ENCODE measurements at regions of chr2 and their contacts with region 1.

Region 1: DNA sequence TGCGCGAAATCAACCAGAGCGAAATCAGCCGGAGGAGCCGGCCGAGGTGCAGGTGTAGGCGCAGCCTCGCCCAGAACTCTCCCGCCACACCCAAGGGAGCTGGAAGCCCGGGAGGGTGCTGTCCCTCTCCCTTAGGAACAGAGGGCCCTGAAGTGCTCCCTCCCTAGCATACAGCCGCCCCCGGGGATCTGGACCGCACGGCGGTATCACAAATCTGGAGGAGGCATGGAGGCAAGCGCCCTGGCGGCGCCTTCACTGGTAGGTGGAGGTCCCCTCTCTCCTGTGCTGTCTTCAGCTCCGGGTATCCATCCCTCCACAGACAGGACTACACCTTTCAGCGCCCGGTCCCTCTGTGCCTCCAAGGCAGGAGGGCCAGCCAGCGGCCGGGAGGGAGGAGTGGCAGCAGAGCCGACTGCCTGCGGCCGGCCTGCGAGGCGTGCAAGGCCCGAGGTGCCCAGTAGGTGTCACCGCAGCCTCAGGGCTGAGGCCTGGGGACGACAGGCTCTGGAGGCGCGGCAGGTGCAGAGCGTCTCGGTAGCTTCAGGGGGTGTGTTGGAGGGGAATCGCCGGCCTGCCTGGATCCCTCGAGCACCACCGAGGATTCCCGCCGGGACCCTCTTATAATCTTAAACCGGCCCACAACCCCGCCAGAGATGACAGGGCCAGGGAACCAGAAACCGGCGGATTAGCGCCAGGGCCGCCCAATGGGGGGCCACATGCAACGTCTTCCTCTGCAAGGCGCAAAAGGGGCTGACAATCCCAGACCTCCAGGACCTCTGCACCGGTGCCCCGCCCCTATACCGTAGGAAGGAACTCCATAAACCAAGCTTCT is 2.8 kb downstream of the IHH start:
- DNase-seq: peak; percentile 66 to 81 (median 68)
- H3K4me3 ChIP-seq: no peak overlapping the region
- H3K4me3 Mint-ChIP-seq: peak overlapping the region; percentile 11 to 84 (median 65)
- H3K27ac ChIP-seq: no peak overlapping the region
- H3K27ac Mint-ChIP-seq: peak overlapping the region in 3 of 8 donors; percentile 47 to 70 (median 55)
- H3K4me1 ChIP-seq: peaks cover 21% of the 10 kb centered on the region
- H3K4me1 Mint-ChIP-seq: peaks cover 12 to 30% (median 23%) of the 10 kb centered on the region in 3 donors
- H3K27me3 ChIP-seq: peaks cover 40% of the 10 kb centered on the region
- H3K27me3 Mint-ChIP-seq: peaks cover 56 to 67% of the 10 kb centered on the region in 2 donors

Region 2: GRCh38 chr2:219029829-219030165 is 28.1 kb before region 1 on chr2:
- CTCF ChIA-PET with region 1: interaction called, 13 read pairs
- POLR2A ChIA-PET with region 1: no interaction called
- DNase-seq: peak; percentile 62 to 84 (median 68)
- H3K4me3 ChIP-seq: no peak overlapping the region
- H3K4me3 Mint-ChIP-seq: no peak overlapping the region
- H3K27ac ChIP-seq: no peak overlapping the region
- H3K27ac Mint-ChIP-seq: peak overlapping the region in 1 of 8 donors; percentile 88
- H3K4me1 ChIP-seq: no peaks in the 10 kb centered on the region
- H3K4me1 Mint-ChIP-seq: no peaks in the 10 kb centered on the region
- H3K27me3 ChIP-seq: peaks cover 4% of the 10 kb centered on the region
- H3K27me3 Mint-ChIP-seq: peaks cover 14 to 44% of the 10 kb centered on the region in 2 donors

Region 3: GRCh38 chr2:219041252-219041651 is 16.7 kb before region 1 on chr2 and contains the start of gene CFAP65:
- CTCF ChIA-PET with region 1: interaction called, 27 read pairs
- POLR2A ChIA-PET with region 1: interaction called, 3 read pairs
- DNase-seq: peak in 1 of 5 donors; percentile 25
- H3K4me3 ChIP-seq: no peak within 1 kb of the TSS
- H3K4me3 Mint-ChIP-seq: peak within 1 kb of the TSS in 6 of 7 donors; percentile 51 to 72 (median 60)
- H3K27ac ChIP-seq: no peak within 1 kb of the TSS
- H3K27ac Mint-ChIP-seq: peak within 1 kb of the TSS in 1 of 8 donors; percentile 77
- H3K4me1 ChIP-seq: no peaks in the 10 kb centered on the region
- H3K4me1 Mint-ChIP-seq: peaks cover 8 to 11% (median 10%) of the 10 kb centered on the region in 3 donors
- H3K27me3 ChIP-seq: peaks cover 10% of the 10 kb centered on the region
- H3K27me3 Mint-ChIP-seq: peaks cover 35 to 80% of the 10 kb centered on the region in 2 donors
- total RNA-seq, gene CFAP65: not detected

Region 4: DNA sequence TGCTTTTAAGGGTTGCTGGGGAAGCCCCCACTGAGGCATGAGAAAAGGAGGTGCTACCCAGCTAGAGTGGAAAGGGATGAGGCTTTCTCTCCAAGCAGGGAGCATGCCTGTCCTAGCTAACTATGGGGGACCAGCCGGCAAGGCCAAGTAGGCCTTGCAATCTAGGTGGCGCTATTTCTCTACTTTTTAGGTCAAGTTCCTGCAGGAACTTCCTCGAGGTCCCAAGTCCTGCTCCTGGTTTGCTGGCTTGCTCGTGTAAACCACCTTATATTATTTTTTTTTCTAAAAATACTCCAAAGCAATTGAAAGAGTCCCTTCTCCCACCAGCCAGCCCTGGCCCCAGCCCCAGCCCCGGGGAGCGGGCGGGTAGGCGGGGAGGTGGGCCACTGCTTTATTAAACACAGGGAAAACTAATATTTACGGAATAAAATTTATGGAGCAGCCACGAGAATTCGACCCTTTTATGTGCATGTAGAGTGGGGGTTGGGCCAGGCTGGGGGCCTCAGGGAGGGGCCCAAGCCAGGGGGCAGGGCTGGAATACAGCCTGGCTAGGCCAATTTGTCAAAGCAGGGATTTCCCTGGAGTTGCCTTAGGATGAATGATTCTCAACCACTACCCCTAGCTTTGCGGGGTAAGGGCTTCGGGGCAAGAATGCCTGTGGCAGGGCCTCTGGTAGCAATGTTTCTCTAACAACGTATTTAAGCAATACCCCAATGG is 15.6 kb after region 1 on chr2:
- CTCF ChIA-PET with region 1: interaction called, 59 read pairs
- POLR2A ChIA-PET with region 1: interaction called, 3 read pairs
- DNase-seq: no peak
- H3K4me3 ChIP-seq: no peak overlapping the region
- H3K4me3 Mint-ChIP-seq: no peak overlapping the region
- H3K27ac ChIP-seq: no peak overlapping the region
- H3K27ac Mint-ChIP-seq: no peak overlapping the region
- H3K4me1 ChIP-seq: no peaks in the 10 kb centered on the region
- H3K4me1 Mint-ChIP-seq: no peaks in the 10 kb centered on the region
- H3K27me3 ChIP-seq: no peaks in the 10 kb centered on the region
- H3K27me3 Mint-ChIP-seq: no peaks in the 10 kb centered on the region

Region 5: DNA sequence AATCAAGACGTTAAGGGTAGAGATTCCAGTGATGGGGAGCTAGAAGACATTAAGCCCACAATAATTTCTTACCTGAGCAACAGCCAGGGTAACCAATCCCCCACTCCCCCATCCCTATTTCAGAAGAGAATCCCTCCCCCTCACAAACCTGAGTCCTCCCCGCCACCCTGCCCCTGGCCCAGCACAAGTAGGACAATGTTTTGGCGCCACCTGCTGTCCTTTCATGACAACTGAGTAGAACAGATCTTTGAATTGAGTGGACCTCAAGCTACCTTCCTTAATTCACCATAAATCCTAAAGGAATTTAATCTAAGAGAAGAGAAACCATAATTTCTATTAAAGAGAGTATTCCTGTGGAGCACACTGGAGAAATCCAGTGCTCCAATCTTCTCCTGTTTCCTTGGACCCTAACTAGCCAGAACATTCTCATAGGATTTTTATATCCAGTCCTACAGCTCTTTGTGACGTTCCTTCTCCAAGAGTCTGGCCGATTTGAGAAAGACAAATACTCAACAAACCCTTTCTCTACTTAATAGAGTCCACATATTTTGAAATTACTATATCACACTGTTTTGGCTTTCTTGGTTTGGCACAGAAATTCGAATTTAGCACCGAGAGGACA is 61.6 kb after region 1 on chr2:
- CTCF ChIA-PET with region 1: interaction called, 38 read pairs
- POLR2A ChIA-PET with region 1: no interaction called
- DNase-seq: peak; percentile 21 to 66 (median 38)
- H3K4me3 ChIP-seq: no peak overlapping the region
- H3K4me3 Mint-ChIP-seq: no peak overlapping the region
- H3K27ac ChIP-seq: no peak overlapping the region
- H3K27ac Mint-ChIP-seq: no peak overlapping the region
- H3K4me1 ChIP-seq: peaks cover 5% of the 10 kb centered on the region
- H3K4me1 Mint-ChIP-seq: peaks cover 15 to 16% (median 16%) of the 10 kb centered on the region in 3 donors
- H3K27me3 ChIP-seq: no peaks in the 10 kb centered on the region
- H3K27me3 Mint-ChIP-seq: no peaks in the 10 kb centered on the region

Region 6: DNA sequence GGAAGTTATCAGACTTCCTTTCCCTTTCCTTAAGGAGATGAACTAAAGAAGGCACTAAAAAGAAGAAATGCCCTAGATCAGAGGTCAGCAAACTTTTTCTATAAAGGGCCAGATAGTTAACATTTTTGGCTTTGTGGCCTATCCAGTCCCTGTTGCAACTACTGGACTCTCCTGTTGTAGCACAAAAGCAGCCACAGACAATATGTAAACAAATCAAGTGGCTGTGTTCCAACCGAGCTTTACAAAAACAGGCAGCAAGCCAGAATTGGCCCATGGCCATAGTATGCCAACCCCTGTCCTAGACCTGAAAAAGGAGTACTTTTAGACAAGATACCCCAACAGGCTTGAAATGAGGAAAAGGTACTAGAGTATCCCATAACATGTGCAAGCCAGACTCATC is 91.7 kb after region 1 on chr2:
- CTCF ChIA-PET with region 1: interaction called, 70 read pairs
- POLR2A ChIA-PET with region 1: no interaction called
- DNase-seq: no peak
- H3K4me3 ChIP-seq: no peak overlapping the region
- H3K4me3 Mint-ChIP-seq: no peak overlapping the region
- H3K27ac ChIP-seq: no peak overlapping the region
- H3K27ac Mint-ChIP-seq: no peak overlapping the region
- H3K4me1 ChIP-seq: no peaks in the 10 kb centered on the region
- H3K4me1 Mint-ChIP-seq: no peaks in the 10 kb centered on the region
- H3K27me3 ChIP-seq: no peaks in the 10 kb centered on the region
- H3K27me3 Mint-ChIP-seq: no peaks in the 10 kb centered on the region